ENCODE measurements at regions of chr1 and their contacts with region 1.

Region 1: GRCh38 chr1:51926171-51926812 is 47.8 kb upstream of the NRDC start:
- DNase-seq: no peak
- H3K4me3 ChIP-seq: no peak overlapping the region
- H3K27ac ChIP-seq: no peak overlapping the region
- H3K4me1 ChIP-seq: no peaks in the 10 kb centered on the region
- H3K27me3 ChIP-seq: no peaks in the 10 kb centered on the region
- CTCF ChIP-seq: peak; percentile 20 to 73 (median 55)
- EP300 ChIP-seq: no peak
- POLR2A ChIP-seq: no peak
- RAD21 ChIP-seq: peak; percentile 66 to 82

Region 2: GRCh38 chr1:51906306-51907078 is 19.8 kb before region 1 on chr1:
- CTCF ChIA-PET with region 1: interaction called, 17 read pairs
- POLR2A ChIA-PET with region 1: interaction called, 7 read pairs
- DNase-seq: no peak
- H3K4me3 ChIP-seq: no peak overlapping the region
- H3K27ac ChIP-seq: no peak overlapping the region
- H3K4me1 ChIP-seq: peaks cover 2 to 16% (median 8%) of the 10 kb centered on the region in 4 experiments; a peak in 4 of 7 replicates
- H3K27me3 ChIP-seq: no peaks in the 10 kb centered on the region
- CTCF ChIP-seq: no peak
- EP300 ChIP-seq: no peak
- POLR2A ChIP-seq: no peak
- RAD21 ChIP-seq: no peak

Region 3: GRCh38 chr1:51956528-51957509 is 30.5 kb after region 1 on chr1:
- CTCF ChIA-PET with region 1: interaction called, 10 read pairs
- POLR2A ChIA-PET with region 1: no interaction called
- DNase-seq: no peak
- H3K4me3 ChIP-seq: no peak overlapping the region
- H3K27ac ChIP-seq: 0 out of 2 replicates have a peak overlapping the region, but pooled peaks have one; percentile 12
- H3K4me1 ChIP-seq: peaks cover 7 to 16% (median 12%) of the 10 kb centered on the region in 4 experiments; a peak in 6 of 7 replicates
- H3K27me3 ChIP-seq: no peaks in the 10 kb centered on the region
- CTCF ChIP-seq: no peak
- EP300 ChIP-seq: no peak
- POLR2A ChIP-seq: no peak
- RAD21 ChIP-seq: no peak

Region 4: GRCh38 chr1:52002038-52002917 is 76.0 kb after region 1 on chr1:
- CTCF ChIA-PET with region 1: interaction called, 11 read pairs
- POLR2A ChIA-PET with region 1: no interaction called
- DNase-seq: peak in 1 of 2 experiments; percentile 65
- H3K4me3 ChIP-seq: no peak overlapping the region
- H3K27ac ChIP-seq: no peak overlapping the region
- H3K4me1 ChIP-seq: peaks cover 9 to 19% (median 18%) of the 10 kb centered on the region in 4 experiments; a peak in 6 of 7 replicates
- H3K27me3 ChIP-seq: no peaks in the 10 kb centered on the region; a peak in 1 of 7 replicates
- CTCF ChIP-seq: peak; percentile 48 to 98 (median 83)
- EP300 ChIP-seq: no peak
- POLR2A ChIP-seq: no peak
- RAD21 ChIP-seq: peak; percentile 99

Measured in H1 (cell line).